Ovary (tissue), 10 donors: ENCODE measurements at regions of chr3 and their contacts with region 1.

Region 1: DNA sequence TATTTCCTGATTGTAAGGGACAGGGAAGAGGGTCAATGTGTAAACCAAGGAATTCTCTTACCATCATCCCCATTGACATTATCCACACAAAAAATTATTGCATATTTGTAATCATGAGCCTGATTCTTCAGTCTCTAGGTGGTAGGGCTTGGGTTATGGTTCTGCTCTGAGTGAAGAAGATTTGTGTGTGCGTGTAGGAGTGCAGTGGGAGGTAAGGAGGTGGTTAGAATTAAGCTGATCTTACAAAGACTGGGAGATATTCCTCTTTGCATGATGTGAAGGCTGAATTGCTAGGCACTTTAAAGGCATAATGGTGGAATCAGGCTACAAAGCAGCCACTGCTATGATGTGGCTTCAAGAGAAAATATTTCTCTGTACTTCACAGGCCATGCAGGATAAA is 23.0 kb upstream of the MINDY4B start:
- DNase-seq: no peak
- H3K4me3 ChIP-seq: no peak overlapping the region
- H3K27ac ChIP-seq: no peak overlapping the region
- H3K4me1 ChIP-seq: no peaks in the 10 kb centered on the region
- H3K27me3 ChIP-seq: no peaks in the 10 kb centered on the region
- CTCF ChIP-seq: no peak
- EP300 ChIP-seq: no peak
- POLR2A ChIP-seq: no peak

Region 2: DNA sequence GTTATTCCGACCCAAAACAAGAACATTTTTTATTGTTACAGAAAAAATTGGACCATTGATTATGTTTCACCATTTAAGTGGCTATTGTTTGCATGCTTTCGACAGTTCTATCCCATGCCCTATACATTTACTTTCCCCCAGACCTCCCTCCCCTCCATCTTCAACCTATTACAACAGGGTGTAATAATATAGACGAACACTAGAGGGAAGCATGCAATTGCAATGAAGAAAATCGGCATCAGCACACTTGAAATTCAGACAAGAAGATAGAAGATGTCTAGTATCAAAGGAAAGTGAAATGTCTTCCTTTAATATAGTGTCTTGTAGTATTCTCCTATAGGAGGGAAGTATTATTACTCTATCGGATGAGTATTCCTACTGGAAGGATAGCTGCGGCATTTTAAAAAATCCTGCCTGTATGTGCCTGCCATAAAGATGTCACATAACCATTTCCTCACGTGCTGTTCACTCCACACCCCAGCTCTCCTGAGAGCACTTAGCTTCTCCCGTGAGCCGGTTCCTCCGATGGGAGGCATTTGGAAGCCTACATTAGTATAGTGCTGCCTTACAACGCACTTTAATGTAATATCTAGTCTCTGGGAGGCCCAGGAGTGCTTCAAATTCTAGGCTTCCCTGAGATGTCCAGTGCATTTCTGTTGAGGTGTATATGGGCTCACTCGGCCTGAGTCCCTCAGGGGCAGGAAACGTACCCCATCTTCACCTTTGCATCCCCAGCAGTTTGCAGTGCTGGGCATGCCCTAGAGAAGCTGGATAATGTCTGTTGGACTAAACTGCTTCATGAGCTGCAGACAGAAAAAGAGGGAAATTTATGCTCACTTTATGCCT is 206.7 kb before region 1 on chr3:
- intact Hi-C with region 1: no loop called
- DNase-seq: no peak
- H3K4me3 ChIP-seq: peak overlapping the region; percentile 0
- H3K27ac ChIP-seq: no peak overlapping the region
- H3K4me1 ChIP-seq: no peaks in the 10 kb centered on the region
- H3K27me3 ChIP-seq: no peaks in the 10 kb centered on the region
- CTCF ChIP-seq: peak; percentile 60 to 93 (median 90)
- EP300 ChIP-seq: no peak
- POLR2A ChIP-seq: no peak

Region 3: DNA sequence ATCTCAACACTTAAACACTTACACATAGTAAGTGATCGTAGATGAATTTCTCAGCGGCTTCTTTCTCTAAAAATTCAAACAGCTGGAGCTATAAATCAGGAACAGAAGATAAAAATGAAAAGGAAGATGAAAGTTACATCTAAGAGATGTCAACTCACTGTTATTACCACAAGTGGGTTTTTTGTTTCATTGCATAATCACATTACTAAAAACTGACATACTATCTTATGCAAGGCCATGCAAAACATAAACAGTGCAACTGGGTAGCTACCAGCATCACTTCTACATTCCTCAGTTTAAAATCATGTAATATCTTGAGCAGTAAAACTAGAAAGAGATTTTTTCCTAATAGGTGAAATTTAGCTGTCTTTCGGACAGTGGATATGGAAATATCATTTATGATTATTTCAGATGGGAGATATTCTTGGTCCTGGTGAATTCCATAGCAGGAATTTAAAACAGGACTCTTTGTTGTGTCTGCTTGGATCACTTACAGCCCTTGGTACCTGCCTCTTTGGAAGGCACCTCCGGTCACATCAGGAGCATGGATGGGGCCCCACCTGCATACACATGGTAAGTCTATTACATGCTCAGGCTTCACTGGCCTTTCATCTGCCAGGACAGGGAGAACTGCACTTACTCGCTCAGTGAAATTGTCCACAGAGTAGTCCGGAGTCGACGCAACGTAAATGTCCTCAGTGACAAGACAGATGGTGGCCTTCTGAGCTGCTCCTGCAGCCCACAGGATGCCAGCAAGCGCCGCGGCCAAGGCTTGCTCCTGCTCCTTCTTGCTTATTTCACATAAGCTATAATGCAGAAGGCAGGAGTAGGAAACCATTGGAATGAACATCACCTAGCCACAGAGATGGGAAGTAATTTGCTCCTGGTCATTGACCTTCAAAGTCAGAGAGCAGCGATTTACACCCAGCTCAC is 37.7 kb before region 1 on chr3:
- intact Hi-C with region 1: loop called in 1 of 4 experiments (anchors 2 kb)
- DNase-seq: no peak
- H3K4me3 ChIP-seq: no peak overlapping the region
- H3K27ac ChIP-seq: no peak overlapping the region
- H3K4me1 ChIP-seq: no peaks in the 10 kb centered on the region
- H3K27me3 ChIP-seq: no peaks in the 10 kb centered on the region
- CTCF ChIP-seq: no peak
- EP300 ChIP-seq: no peak
- POLR2A ChIP-seq: no peak

Region 4: DNA sequence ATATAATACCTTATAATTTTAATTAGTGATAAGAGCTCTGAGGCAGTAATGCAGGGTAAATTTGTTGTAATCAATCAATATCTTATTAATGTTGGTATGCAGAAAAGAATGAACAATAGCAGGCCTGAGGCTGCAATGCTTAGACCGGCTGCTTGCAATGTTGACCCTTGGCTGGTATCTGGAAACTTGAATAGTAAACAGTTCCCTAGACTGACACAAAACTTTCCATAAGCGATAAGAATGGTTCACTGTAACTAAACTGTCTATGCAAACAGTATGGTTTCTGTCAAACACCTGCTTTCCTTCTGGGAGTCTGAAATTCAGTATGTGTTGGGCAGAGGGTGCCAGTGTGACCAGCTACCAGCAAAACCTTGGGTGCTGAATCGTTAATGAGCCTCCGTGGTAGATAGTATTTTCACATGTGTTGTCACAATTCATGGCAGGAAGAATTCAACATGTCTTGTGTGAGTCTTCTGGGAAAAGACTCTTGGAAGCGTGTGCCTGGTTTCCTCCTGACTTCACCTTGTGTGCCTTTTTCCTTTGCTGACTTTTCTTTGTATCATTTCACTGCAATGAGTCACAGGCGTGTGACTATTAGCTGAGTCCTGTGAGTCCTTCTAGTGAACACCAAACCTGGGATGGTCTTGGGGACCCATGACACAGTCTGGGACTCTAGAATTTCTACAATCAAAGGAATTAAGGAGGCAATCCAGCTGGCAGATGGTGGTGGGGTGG is 75.0 kb after region 1 on chr3:
- intact Hi-C with region 1: no loop called
- DNase-seq: no peak
- H3K4me3 ChIP-seq: no peak overlapping the region
- H3K27ac ChIP-seq: no peak overlapping the region
- H3K4me1 ChIP-seq: no peaks in the 10 kb centered on the region
- H3K27me3 ChIP-seq: no peaks in the 10 kb centered on the region
- CTCF ChIP-seq: no peak
- EP300 ChIP-seq: no peak
- POLR2A ChIP-seq: no peak